Activated CD8-positive, alpha-beta T cell treated with anti-CD3 and anti-CD28 coated beads, Interleukin-2, amount 10 ng/mL, durations not matched to agents 7 days and 5 days (primary cell): ENCODE measurements at regions of chr14 and their contacts with region 1.

Region 1: GRCh38 chr14:91418387-91419043 is 895 bp upstream of the CCDC88C start:
- DNase-seq: peak; percentile 86
- ATAC-seq: peak; percentile 17
- H3K4me3 Mint-ChIP-seq: peak overlapping the region; percentile 73
- H3K27ac Mint-ChIP-seq: peak overlapping the region; percentile 89
- H3K4me1 Mint-ChIP-seq: peaks cover 30% of the 10 kb centered on the region
- H3K27me3 Mint-ChIP-seq: peaks cover 6% of the 10 kb centered on the region

Region 2: DNA sequence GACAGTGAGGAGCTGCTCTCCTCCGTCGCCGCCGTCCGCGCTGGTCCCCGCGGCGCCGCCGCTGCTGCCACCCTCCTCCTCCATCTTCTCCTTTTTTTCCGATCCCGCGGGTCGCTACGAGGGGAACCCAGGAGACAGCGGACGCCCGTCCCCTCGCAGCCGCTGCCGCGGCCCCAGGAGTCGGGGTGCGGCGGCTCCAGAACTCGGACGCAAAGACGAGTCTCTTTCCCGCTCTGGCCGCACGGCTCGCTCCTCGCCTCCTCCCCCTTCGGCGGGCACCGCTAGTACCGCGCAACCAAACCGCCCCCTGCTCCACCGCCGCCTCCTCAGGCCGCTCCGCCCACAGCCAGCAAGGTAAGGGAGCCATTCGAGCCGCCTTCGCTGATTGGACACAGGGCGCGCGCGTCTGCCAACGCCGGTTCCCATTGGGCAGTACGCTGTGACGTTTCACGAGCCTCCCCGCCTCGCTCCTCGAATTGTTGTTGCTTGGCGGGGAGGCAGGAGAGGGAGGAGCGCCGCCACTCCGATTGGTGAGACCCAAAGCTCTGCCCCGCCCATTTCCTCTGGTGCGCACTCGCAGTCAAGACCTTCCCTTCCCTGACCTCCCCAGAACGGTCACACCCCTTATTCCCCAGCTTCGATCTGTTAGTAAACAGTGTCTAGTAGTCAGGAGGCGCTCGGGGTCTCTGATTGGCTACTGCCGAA is 358.0 kb before region 1 on chr14 and contains the start of gene RPS6KA5:
- CTCF ChIA-PET with region 1: no interaction called
- POLR2A ChIA-PET with region 1: no interaction called
- DNase-seq: peak; percentile 100
- ATAC-seq: peak; percentile 85
- H3K4me3 Mint-ChIP-seq: peak within 1 kb of the TSS; percentile 90
- H3K27ac Mint-ChIP-seq: peak within 1 kb of the TSS; percentile 65
- H3K4me1 Mint-ChIP-seq: peaks cover 62% of the 10 kb centered on the region
- H3K27me3 Mint-ChIP-seq: no peaks in the 10 kb centered on the region
- total RNA-seq, gene RPS6KA5: 50.8 to 53.1 TPM

Region 3: GRCh38 chr14:91244501-91244901 is 174.0 kb before region 1 on chr14 and contains the start of gene GPR68:
- CTCF ChIA-PET with region 1: interaction called, 4 read pairs
- POLR2A ChIA-PET with region 1: interaction called, 23 read pairs
- DNase-seq: peak; percentile 61
- ATAC-seq: peak; percentile 12
- H3K4me3 Mint-ChIP-seq: peak within 1 kb of the TSS; percentile 87
- H3K27ac Mint-ChIP-seq: peak within 1 kb of the TSS; percentile 93
- H3K4me1 Mint-ChIP-seq: peaks cover 74% of the 10 kb centered on the region
- H3K27me3 Mint-ChIP-seq: no peaks in the 10 kb centered on the region
- total RNA-seq, gene GPR68: 44.6 to 45.3 TPM

Region 4: GRCh38 chr14:91323671-91324605 is 94.6 kb before region 1 on chr14:
- CTCF ChIA-PET with region 1: interaction called, 233 read pairs
- POLR2A ChIA-PET with region 1: interaction called, 61 read pairs
- DNase-seq: peak; percentile 94
- ATAC-seq: peak; percentile 82
- H3K4me3 Mint-ChIP-seq: peak overlapping the region; percentile 73
- H3K27ac Mint-ChIP-seq: peak overlapping the region; percentile 97
- H3K4me1 Mint-ChIP-seq: peaks cover 79% of the 10 kb centered on the region
- H3K27me3 Mint-ChIP-seq: no peaks in the 10 kb centered on the region

Region 5: DNA sequence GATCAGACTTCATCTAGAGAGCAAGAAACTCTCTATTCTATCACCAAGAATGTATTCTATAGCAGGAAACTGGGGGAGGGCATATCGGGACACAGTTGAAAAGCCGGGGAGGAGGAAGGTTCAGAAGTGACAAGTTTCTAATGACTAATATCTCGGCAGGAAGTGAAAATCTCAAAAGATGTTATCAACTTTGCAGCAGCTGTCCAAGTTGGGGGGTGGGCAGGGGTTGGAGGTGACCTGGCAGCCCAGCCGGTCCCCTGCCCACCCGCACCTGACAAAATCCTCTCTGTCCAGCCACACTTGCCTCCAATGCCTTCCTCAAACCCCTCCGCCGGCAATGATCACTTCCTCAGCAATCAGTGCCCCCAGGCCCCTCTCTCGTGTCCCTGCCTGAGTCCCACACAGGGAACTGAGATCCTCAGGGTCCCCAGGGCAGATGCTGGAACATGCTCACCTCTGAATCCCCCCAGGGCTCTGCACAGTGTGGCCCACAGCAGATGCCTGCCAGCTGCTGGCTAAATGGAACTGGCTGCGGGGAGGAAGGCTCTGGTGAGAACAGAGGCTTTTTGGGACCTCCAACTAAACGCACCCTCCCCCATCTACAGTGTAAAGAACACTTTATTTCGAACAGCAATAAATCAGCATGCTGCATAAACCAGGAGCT is 44.8 kb before region 1 on chr14:
- CTCF ChIA-PET with region 1: interaction called, 36 read pairs
- POLR2A ChIA-PET with region 1: interaction called, 55 read pairs
- DNase-seq: peak; percentile 76
- ATAC-seq: peak; percentile 46
- H3K4me3 Mint-ChIP-seq: peak overlapping the region; percentile 78
- H3K27ac Mint-ChIP-seq: peak overlapping the region; percentile 91
- H3K4me1 Mint-ChIP-seq: peaks cover 100% of the 10 kb centered on the region
- H3K27me3 Mint-ChIP-seq: no peaks in the 10 kb centered on the region

Region 6: GRCh38 chr14:91396959-91397815 is 21.3 kb before region 1 on chr14:
- CTCF ChIA-PET with region 1: interaction called, 151 read pairs
- POLR2A ChIA-PET with region 1: interaction called, 65 read pairs
- DNase-seq: peak; percentile 82
- ATAC-seq: peak; percentile 76
- H3K4me3 Mint-ChIP-seq: peak overlapping the region; percentile 59
- H3K27ac Mint-ChIP-seq: peak overlapping the region; percentile 87
- H3K4me1 Mint-ChIP-seq: peaks cover 94% of the 10 kb centered on the region
- H3K27me3 Mint-ChIP-seq: no peaks in the 10 kb centered on the region

Region 7: GRCh38 chr14:91477388-91477787 is 58.9 kb after region 1 on chr14:
- CTCF ChIA-PET with region 1: no interaction called
- POLR2A ChIA-PET with region 1: no interaction called
- DNase-seq: no peak
- ATAC-seq: no peak
- H3K4me3 Mint-ChIP-seq: no peak overlapping the region
- H3K27ac Mint-ChIP-seq: no peak overlapping the region
- H3K4me1 Mint-ChIP-seq: peaks cover 27% of the 10 kb centered on the region
- H3K27me3 Mint-ChIP-seq: no peaks in the 10 kb centered on the region

Region 8: GRCh38 chr14:91510174-91511042 is 91.9 kb after region 1 on chr14 and contains the start of gene PPP4R3A:
- CTCF ChIA-PET with region 1: no interaction called
- POLR2A ChIA-PET with region 1: interaction called, 11 read pairs
- DNase-seq: peak; percentile 95
- ATAC-seq: peak; percentile 87
- H3K4me3 Mint-ChIP-seq: peak within 1 kb of the TSS; percentile 100
- H3K27ac Mint-ChIP-seq: peak within 1 kb of the TSS; percentile 100
- H3K4me1 Mint-ChIP-seq: peaks cover 20% of the 10 kb centered on the region
- H3K27me3 Mint-ChIP-seq: peaks cover 3% of the 10 kb centered on the region
- total RNA-seq, gene PPP4R3A: 121 to 129 TPM